Mammary epithelial cell (primary cell): ENCODE measurements at regions of chr17 and their contacts with region 1.

Region 1: GRCh38 chr17:43517615-43518386 is 28.3 kb downstream of the ETV4 start:
- DNase-seq: peak; percentile 9
- H3K4me3 ChIP-seq: no peak overlapping the region
- H3K27ac ChIP-seq: no peak overlapping the region
- H3K4me1 ChIP-seq: no peaks in the 10 kb centered on the region
- H3K27me3 ChIP-seq: no peaks in the 10 kb centered on the region
- CTCF ChIP-seq: no peak

Region 2: DNA sequence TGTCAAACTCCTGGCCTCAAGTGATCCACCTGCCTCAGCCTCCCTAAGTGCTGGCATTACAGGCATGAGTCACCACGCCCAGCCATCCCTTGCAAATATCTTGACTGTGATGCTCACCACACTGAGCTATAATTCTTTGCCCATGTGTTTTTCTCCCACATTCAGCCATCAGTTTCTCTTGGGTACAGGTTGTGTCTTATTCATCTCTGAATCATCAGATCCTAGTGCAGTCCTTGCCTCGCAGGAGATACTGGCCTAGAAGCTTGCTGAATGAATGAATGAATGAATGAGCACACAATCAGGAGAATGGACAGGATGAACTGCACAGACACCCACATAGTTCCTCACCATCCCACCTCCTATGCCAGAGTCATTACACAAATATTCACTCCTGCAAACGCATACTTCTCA is 52.7 kb after region 1 on chr17:
- CTCF ChIA-PET with region 1: no interaction called
- dilution Hi-C with region 1: no loop called
- in situ Hi-C with region 1: loop called in 1 of 2 experiments (anchors 5 kb)
- intact Hi-C with region 1: loop called (anchors 1 kb)
- DNase-seq: peak; percentile 95
- H3K4me3 ChIP-seq: no peak overlapping the region
- H3K27ac ChIP-seq: no peak overlapping the region
- H3K4me1 ChIP-seq: peaks cover 17% of the 10 kb centered on the region
- H3K27me3 ChIP-seq: no peaks in the 10 kb centered on the region
- CTCF ChIP-seq: no peak